Sigmoid colon (tissue), 7 donors: ENCODE measurements at regions of chr21 and their contacts with region 1.

Region 1: DNA sequence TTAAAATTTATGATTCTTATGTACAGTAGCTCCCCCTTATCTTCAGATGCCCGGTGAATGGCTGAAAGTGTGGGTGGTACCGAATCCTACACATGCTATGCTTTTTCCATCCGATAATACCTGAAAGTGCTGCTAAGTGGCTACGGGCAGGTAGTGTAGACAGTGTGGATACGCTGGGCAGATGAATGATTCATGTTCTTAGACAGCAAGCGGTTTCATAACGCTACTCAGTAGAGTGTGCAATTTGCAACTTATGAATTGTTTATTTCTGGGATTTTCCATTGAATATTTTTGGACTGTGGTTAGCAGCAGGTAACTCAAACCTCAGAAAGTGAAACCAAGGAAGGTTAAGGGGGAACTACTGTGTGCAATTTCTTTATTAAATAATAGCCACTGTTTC is 7.5 kb downstream of the PCP4 start:
- DNase-seq: no peak
- H3K4me3 ChIP-seq: no peak overlapping the region
- H3K27ac ChIP-seq: peak overlapping the region in 1 of 4 donors; percentile 31
- H3K4me1 ChIP-seq: peaks cover 0 to 3% (median under 1%) of the 10 kb centered on the region in 4 donors
- H3K27me3 ChIP-seq: no peaks in the 10 kb centered on the region
- CTCF ChIP-seq: no peak
- EP300 ChIP-seq: no peak
- POLR2A ChIP-seq: no peak

Region 2: DNA sequence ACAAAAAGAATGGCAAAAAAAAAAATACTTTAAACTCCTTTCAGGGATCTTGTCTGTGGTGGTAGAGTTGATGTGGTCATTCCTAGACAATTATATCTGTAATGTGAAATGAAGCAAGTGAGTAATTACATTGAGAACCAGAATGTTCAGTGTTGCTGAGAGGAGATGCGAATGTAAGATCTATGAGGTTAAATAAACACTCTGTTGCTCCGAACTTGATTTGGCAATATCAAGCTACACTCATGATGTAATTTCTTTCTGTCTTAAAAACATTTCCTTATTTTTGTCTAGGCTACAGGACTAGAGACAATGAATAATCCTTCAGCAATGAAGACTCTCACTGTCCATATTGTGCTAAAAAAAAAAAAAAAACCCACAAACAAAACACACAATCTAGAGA is 192.9 kb before region 1 on chr21:
- intact Hi-C with region 1: loop called (anchors 10 kb)
- DNase-seq: no peak
- H3K4me3 ChIP-seq: no peak overlapping the region
- H3K27ac ChIP-seq: no peak overlapping the region
- H3K4me1 ChIP-seq: peaks cover 0 to 7% (median 5%) of the 10 kb centered on the region in 4 donors
- H3K27me3 ChIP-seq: no peaks in the 10 kb centered on the region
- CTCF ChIP-seq: no peak
- EP300 ChIP-seq: no peak
- POLR2A ChIP-seq: no peak

Region 3: DNA sequence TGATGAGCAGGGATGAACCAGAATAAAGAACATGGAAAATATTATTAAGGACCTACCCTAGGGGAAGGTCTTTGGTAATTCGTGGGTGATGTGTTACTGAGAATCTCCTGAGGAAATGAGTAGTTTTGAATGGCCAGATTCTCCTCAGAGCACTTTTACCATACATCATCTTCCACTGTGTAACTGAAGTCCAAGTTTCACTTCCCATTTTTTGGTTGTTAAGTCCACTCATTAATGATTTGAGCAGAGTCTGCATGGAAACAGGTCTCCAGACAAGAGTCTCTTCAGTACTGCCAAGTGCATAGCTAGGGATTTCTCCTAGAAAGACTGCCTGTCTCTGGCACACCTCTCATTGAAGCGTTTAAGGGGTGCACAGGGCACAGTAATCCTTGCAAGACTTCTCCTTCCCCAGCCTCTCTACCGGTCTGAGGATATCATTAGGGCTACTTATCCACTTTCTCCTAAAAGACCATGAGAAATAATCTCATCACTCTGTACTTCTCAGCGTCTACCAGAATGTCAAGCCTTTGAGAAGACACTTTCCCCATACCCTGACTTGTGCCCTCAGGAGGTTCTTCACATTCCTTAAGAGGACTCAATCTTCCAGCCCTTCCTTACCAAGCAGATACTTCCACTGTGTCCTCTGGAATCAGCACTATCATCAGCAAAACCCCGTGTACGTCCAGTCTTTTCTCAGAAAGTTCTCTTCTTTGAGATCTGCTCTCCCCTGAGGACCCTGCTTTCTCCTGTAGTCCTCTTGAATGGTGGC is 56.0 kb before region 1 on chr21:
- intact Hi-C with region 1: no loop called
- DNase-seq: no peak
- H3K4me3 ChIP-seq: no peak overlapping the region
- H3K27ac ChIP-seq: no peak overlapping the region
- H3K4me1 ChIP-seq: no peaks in the 10 kb centered on the region
- H3K27me3 ChIP-seq: no peaks in the 10 kb centered on the region
- CTCF ChIP-seq: no peak
- EP300 ChIP-seq: no peak
- POLR2A ChIP-seq: no peak